A673 (cell line): ENCODE measurements at regions of chr3 and their contacts with region 1.

Region 1: GRCh38 chr3:36957862-36958686 is 13.2 kb upstream of the TRANK1 start:
- DNase-seq: no peak
- H3K4me3 ChIP-seq: no peak overlapping the region
- H3K27ac ChIP-seq: no peak overlapping the region
- H3K4me1 ChIP-seq: peaks cover 21% of the 10 kb centered on the region
- H3K27me3 ChIP-seq: no peaks in the 10 kb centered on the region
- CTCF ChIP-seq: no peak

Region 2: GRCh38 chr3:36729204-36730056 is 228.6 kb before region 1 on chr3:
- CTCF ChIA-PET with region 1: interaction called, 3 read pairs
- POLR2A ChIA-PET with region 1: no interaction called
- intact Hi-C with region 1: loop called (anchors 2 kb)
- DNase-seq: peak; percentile 69
- H3K4me3 ChIP-seq: no peak overlapping the region
- H3K27ac ChIP-seq: no peak overlapping the region
- H3K4me1 ChIP-seq: no peaks in the 10 kb centered on the region
- H3K27me3 ChIP-seq: no peaks in the 10 kb centered on the region
- CTCF ChIP-seq: peak; percentile 84

Region 3: DNA sequence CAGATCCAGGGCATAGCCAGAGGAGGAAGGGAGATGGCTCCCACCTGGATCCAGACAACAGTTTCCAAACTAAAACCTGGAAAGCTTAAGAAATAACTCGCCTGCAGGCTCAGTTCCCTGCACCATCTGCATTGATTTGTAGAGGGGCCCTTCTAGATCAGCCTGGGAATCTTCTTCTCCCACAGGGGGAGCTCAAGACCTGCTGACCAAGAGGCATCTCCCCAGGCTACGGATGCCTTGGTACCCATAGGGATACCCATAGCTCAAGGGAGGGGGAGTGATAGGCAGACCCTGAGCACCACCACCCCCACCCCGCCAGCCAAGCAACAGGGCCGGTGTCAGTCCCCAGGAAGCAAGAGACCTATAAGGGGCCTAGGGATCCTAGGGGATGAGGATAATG is 165.7 kb before region 1 on chr3:
- CTCF ChIA-PET with region 1: interaction called, 14 read pairs
- POLR2A ChIA-PET with region 1: no interaction called
- intact Hi-C with region 1: loop called (anchors 2 kb)
- DNase-seq: peak; percentile 62
- H3K4me3 ChIP-seq: no peak overlapping the region
- H3K27ac ChIP-seq: no peak overlapping the region
- H3K4me1 ChIP-seq: no peaks in the 10 kb centered on the region
- H3K27me3 ChIP-seq: no peaks in the 10 kb centered on the region
- CTCF ChIP-seq: peak; percentile 61

Region 4: GRCh38 chr3:36837089-36837488 is 121.0 kb before region 1 on chr3:
- CTCF ChIA-PET with region 1: interaction called, 9 read pairs
- POLR2A ChIA-PET with region 1: no interaction called
- intact Hi-C with region 1: loop called (anchors 5 kb)
- DNase-seq: peak; percentile 37
- H3K4me3 ChIP-seq: no peak overlapping the region
- H3K27ac ChIP-seq: no peak overlapping the region
- H3K4me1 ChIP-seq: no peaks in the 10 kb centered on the region
- H3K27me3 ChIP-seq: no peaks in the 10 kb centered on the region
- CTCF ChIP-seq: peak; percentile 71

Region 5: DNA sequence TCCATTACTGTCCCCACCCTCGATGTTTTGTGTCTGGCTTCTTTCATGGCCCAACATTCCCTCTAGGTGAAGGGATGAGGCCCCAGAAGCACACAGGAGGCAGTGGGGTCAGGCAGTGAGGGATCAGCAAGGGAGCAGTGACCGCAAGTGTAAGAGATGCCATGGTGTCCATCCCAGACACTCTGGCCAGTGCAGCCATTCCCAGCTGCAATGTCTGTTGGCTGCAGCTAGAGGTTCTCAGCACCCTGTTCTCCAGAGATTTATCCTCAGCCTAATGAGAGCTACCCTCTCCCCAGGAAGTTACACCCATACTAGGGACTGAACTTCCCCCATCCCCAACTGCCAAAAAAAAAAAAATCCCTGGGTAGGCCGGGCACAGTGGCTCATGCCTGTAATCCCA is 53.4 kb before region 1 on chr3:
- CTCF ChIA-PET with region 1: interaction called, 4 read pairs
- POLR2A ChIA-PET with region 1: no interaction called
- intact Hi-C with region 1: loop called (anchors 5 kb)
- DNase-seq: no peak
- H3K4me3 ChIP-seq: no peak overlapping the region
- H3K27ac ChIP-seq: no peak overlapping the region
- H3K4me1 ChIP-seq: peaks cover 34% of the 10 kb centered on the region
- H3K27me3 ChIP-seq: no peaks in the 10 kb centered on the region
- CTCF ChIP-seq: peak; percentile 50

Region 6: GRCh38 chr3:37154668-37155314 is 196.7 kb after region 1 on chr3:
- CTCF ChIA-PET with region 1: no interaction called
- POLR2A ChIA-PET with region 1: no interaction called
- intact Hi-C with region 1: no loop called
- DNase-seq: no peak
- H3K4me3 ChIP-seq: no peak overlapping the region
- H3K27ac ChIP-seq: no peak overlapping the region
- H3K4me1 ChIP-seq: no peaks in the 10 kb centered on the region
- H3K27me3 ChIP-seq: no peaks in the 10 kb centered on the region
- CTCF ChIP-seq: no peak

Region 7: DNA sequence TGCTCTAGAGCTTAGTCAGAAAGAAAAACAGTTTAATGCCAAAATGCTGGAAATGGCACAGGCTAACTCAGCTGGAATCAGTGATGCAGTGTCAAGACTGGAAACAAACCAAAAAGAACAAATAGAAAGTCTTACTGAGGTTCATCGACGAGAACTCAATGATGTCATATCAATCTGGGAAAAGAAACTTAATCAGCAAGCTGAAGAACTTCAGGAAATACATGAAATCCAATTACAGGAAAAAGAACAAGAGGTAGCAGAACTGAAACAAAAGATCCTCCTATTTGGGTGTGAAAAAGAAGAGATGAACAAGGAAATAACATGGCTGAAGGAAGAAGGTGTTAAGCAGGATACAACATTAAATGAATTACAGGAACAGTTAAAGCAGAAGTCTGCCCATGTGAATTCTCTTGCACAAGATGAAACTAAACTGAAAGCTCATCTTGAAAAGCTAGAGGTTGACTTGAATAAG is 366.8 kb after region 1 on chr3:
- CTCF ChIA-PET with region 1: interaction called, 18 read pairs
- POLR2A ChIA-PET with region 1: no interaction called
- intact Hi-C with region 1: no loop called
- DNase-seq: no peak
- H3K4me3 ChIP-seq: no peak overlapping the region
- H3K27ac ChIP-seq: no peak overlapping the region
- H3K4me1 ChIP-seq: no peaks in the 10 kb centered on the region
- H3K27me3 ChIP-seq: no peaks in the 10 kb centered on the region
- CTCF ChIP-seq: no peak